H1 (cell line): ENCODE measurements at regions of chr3 and their contacts with region 1.

Region 1: GRCh38 chr3:136036306-136036705 is 70.8 kb downstream of the PPP2R3A start:
- DNase-seq: no peak
- H3K4me3 ChIP-seq: no peak overlapping the region
- H3K27ac ChIP-seq: no peak overlapping the region
- H3K4me1 ChIP-seq: no peaks in the 10 kb centered on the region
- H3K27me3 ChIP-seq: no peaks in the 10 kb centered on the region
- CTCF ChIP-seq: no peak
- EP300 ChIP-seq: no peak
- POLR2A ChIP-seq: no peak
- RAD21 ChIP-seq: no peak

Region 2: GRCh38 chr3:135792174-135792573 is 244.1 kb before region 1 on chr3:
- CTCF ChIA-PET with region 1: no interaction called
- POLR2A ChIA-PET with region 1: no interaction called
- DNase-seq: no peak
- H3K4me3 ChIP-seq: no peak overlapping the region
- H3K27ac ChIP-seq: no peak overlapping the region
- H3K4me1 ChIP-seq: no peaks in the 10 kb centered on the region
- H3K27me3 ChIP-seq: no peaks in the 10 kb centered on the region
- CTCF ChIP-seq: peak; percentile 34 to 57 (median 39); a peak in 3 of 4 replicates
- EP300 ChIP-seq: no peak
- POLR2A ChIP-seq: no peak
- RAD21 ChIP-seq: peak; percentile 56 to 66

Region 3: DNA sequence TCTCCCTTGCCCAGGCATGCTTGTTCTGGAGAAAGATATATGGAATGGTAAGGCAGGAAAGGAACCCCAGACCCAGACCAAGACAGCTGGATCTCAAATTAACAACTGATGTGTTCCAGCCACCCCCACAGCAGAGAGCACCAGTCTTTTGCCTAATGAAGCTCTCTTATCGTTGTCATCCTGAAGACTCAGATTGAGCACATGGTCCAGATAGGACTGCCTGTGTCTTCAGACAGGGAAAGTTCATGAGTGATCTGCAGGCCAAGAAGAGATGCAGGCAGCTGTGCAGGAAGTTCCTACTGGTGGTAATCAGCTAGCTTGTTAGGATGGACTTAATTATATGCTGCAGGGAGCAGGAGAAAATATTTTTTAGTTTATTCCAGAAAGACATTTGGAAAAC is 17.4 kb before region 1 on chr3:
- CTCF ChIA-PET with region 1: no interaction called
- POLR2A ChIA-PET with region 1: no interaction called
- DNase-seq: no peak
- H3K4me3 ChIP-seq: no peak overlapping the region
- H3K27ac ChIP-seq: no peak overlapping the region
- H3K4me1 ChIP-seq: no peaks in the 10 kb centered on the region
- H3K27me3 ChIP-seq: no peaks in the 10 kb centered on the region
- CTCF ChIP-seq: no peak
- EP300 ChIP-seq: no peak
- POLR2A ChIP-seq: no peak
- RAD21 ChIP-seq: no peak

Region 4: DNA sequence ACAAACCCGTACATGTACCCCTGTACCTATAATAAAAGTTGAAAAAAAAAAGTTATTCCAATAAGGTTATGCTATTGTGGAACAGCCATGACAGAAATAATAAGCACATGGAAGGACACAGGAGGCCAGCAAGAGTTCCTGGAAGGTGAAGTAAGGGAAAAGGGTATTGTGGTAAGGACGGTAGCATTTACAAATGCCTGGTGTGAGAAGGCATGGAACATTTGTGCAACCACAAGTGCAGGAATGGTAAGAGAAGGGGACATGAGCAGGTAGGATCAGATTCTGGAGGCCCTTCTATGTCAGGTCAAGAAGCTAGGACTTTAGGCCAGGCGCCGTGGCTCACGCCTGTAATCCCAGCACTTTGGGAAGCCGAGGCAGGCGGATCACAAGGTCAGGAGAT is 11.8 kb after region 1 on chr3:
- CTCF ChIA-PET with region 1: interaction called, 10 read pairs
- POLR2A ChIA-PET with region 1: no interaction called
- DNase-seq: no peak
- H3K4me3 ChIP-seq: no peak overlapping the region
- H3K27ac ChIP-seq: no peak overlapping the region
- H3K4me1 ChIP-seq: no peaks in the 10 kb centered on the region
- H3K27me3 ChIP-seq: no peaks in the 10 kb centered on the region
- CTCF ChIP-seq: no peak
- EP300 ChIP-seq: no peak
- POLR2A ChIP-seq: no peak
- RAD21 ChIP-seq: no peak

Region 5: DNA sequence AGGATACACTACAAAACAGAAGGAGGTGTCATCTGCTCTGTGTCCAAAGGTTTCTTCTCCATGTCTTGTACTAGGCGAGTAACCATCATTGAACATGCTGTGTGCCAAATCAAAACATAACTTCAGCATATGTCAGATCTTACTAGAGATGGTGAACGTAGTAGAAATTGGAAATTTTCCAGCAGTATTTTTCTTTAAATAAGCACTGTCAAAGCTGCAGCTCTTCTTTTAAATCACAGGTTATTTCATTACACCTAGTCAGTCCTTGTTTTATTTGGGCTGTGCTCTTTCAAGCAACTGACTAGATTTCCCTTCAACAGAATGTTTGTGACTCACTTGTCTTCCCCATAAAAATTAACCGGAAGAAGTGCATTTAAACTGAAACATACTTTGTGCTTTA is 113.4 kb after region 1 on chr3:
- CTCF ChIA-PET with region 1: no interaction called
- POLR2A ChIA-PET with region 1: no interaction called
- DNase-seq: no peak
- H3K4me3 ChIP-seq: no peak overlapping the region
- H3K27ac ChIP-seq: no peak overlapping the region
- H3K4me1 ChIP-seq: no peaks in the 10 kb centered on the region
- H3K27me3 ChIP-seq: no peaks in the 10 kb centered on the region
- CTCF ChIP-seq: no peak
- EP300 ChIP-seq: no peak
- POLR2A ChIP-seq: no peak
- RAD21 ChIP-seq: no peak